ENCODE measurements at regions of chr1 and their contacts with region 1.

Region 1: DNA sequence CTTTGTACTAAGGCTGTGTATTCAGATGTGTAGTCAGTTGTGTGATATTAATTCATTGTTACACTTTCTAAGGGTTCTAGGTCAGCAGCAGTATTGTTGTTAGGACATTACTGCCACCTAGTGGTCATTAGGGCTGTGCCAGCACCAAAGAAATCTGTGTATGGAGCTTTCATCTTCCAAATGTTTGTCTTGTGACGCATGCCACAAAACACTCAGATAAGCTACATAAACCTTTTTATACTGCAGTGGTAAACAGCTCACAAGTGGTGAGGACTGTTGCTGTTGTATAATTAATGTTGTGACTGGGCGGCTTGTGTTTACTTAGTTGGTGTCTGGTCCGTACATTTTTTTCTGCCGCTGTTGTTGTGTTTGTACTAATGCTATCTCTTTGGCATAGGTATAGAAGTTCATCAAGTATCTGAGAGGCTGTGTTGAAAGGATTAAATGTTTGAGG is 51.7 kb downstream of the S1PR1 start:
- DNase-seq: peak; percentile 66
- H3K27ac ChIP-seq: no peak overlapping the region
- CTCF ChIP-seq: peak; percentile 90

Region 2: DNA sequence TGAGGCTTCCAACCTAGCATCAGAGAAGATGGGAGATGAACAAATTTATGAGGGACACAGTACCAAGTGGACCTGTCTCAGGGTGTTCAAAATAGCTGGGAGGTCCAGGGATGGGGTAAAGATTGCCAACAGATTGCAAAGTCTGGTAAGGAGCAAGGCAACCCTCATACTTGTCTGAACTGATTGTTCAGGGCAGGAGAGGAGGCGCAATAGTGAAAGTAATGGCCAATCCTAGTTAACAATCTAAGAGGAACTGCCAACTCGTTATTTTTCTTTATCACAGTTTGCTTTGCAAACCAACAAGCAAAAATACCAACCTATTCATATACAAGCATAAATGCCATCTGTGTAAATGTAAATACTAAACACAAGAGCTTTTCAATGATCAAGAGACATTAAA is 130.1 kb before region 1 on chr1:
- CTCF ChIA-PET with region 1: no interaction called
- POLR2A ChIA-PET with region 1: no interaction called
- DNase-seq: no peak
- H3K27ac ChIP-seq: no peak overlapping the region
- CTCF ChIP-seq: no peak

Region 3: GRCh38 chr1:101238681-101239094 is 49.8 kb before region 1 on chr1:
- CTCF ChIA-PET with region 1: interaction called, 11 read pairs
- POLR2A ChIA-PET with region 1: no interaction called
- DNase-seq: peak; percentile 84
- H3K27ac ChIP-seq: no peak overlapping the region
- CTCF ChIP-seq: peak; percentile 94

Region 4: GRCh38 chr1:101298663-101299062 is 10.1 kb after region 1 on chr1:
- CTCF ChIA-PET with region 1: interaction called, 15 read pairs
- POLR2A ChIA-PET with region 1: no interaction called
- DNase-seq: no peak
- H3K27ac ChIP-seq: no peak overlapping the region
- CTCF ChIP-seq: no peak